WTC11 (cell line): ENCODE measurements at regions of chr9 and their contacts with region 1.

Region 1: GRCh38 chr9:70111042-70111602 is 67.5 kb downstream of the MAMDC2 start:
- DNase-seq: peak; percentile 90
- ATAC-seq: peak; percentile 65
- H3K4me3 Mint-ChIP-seq: no peak overlapping the region
- H3K27ac Mint-ChIP-seq: no peak overlapping the region
- H3K4me1 Mint-ChIP-seq: peaks cover 44% of the 10 kb centered on the region
- H3K27me3 Mint-ChIP-seq: no peaks in the 10 kb centered on the region
- CTCF ChIP-seq: peak; percentile 89

Region 2: DNA sequence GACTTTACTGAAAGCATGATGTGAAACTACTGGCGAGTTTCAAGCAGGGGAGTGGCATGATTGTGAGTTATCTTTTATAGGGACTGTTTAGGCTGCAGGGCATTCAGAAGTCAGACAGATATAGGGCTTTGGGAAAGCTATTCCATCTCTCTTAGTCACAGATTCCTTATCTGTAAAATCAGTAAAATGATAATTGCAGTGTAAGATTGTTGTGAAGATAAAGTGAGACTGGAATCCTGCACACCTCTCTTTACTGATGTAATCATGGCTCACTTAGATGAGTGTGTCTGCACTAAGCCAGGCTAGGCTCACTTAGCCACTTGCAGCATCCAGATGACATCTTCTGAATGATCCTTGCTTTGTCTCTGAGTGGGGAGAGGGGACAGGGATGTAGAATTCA is 149.3 kb before region 1 on chr9:
- CTCF ChIA-PET with region 1: interaction called, 220 read pairs
- POLR2A ChIA-PET with region 1: no interaction called
- DNase-seq: no peak
- ATAC-seq: no peak
- H3K4me3 Mint-ChIP-seq: no peak overlapping the region
- H3K27ac Mint-ChIP-seq: no peak overlapping the region
- H3K4me1 Mint-ChIP-seq: peaks cover 37% of the 10 kb centered on the region
- H3K27me3 Mint-ChIP-seq: no peaks in the 10 kb centered on the region
- CTCF ChIP-seq: no peak

Region 3: GRCh38 chr9:69981686-69982450 is 129.3 kb before region 1 on chr9:
- CTCF ChIA-PET with region 1: interaction called, 220 read pairs
- POLR2A ChIA-PET with region 1: no interaction called
- DNase-seq: no peak
- ATAC-seq: peak; percentile 39
- H3K4me3 Mint-ChIP-seq: no peak overlapping the region
- H3K27ac Mint-ChIP-seq: no peak overlapping the region
- H3K4me1 Mint-ChIP-seq: peaks cover 15% of the 10 kb centered on the region
- H3K27me3 Mint-ChIP-seq: no peaks in the 10 kb centered on the region; the same call in 1 of the 2 replicates
- CTCF ChIP-seq: no peak

Region 4: GRCh38 chr9:70034292-70034711 is 76.8 kb before region 1 on chr9:
- CTCF ChIA-PET with region 1: interaction called, 10 read pairs
- POLR2A ChIA-PET with region 1: no interaction called
- DNase-seq: no peak
- ATAC-seq: no peak
- H3K4me3 Mint-ChIP-seq: no peak overlapping the region
- H3K27ac Mint-ChIP-seq: no peak overlapping the region
- H3K4me1 Mint-ChIP-seq: 0 out of 2 replicates have a peak, but pooled peaks cover 3% of the 10 kb centered on the region
- H3K27me3 Mint-ChIP-seq: peaks cover 6% of the 10 kb centered on the region
- CTCF ChIP-seq: no peak

Region 5: DNA sequence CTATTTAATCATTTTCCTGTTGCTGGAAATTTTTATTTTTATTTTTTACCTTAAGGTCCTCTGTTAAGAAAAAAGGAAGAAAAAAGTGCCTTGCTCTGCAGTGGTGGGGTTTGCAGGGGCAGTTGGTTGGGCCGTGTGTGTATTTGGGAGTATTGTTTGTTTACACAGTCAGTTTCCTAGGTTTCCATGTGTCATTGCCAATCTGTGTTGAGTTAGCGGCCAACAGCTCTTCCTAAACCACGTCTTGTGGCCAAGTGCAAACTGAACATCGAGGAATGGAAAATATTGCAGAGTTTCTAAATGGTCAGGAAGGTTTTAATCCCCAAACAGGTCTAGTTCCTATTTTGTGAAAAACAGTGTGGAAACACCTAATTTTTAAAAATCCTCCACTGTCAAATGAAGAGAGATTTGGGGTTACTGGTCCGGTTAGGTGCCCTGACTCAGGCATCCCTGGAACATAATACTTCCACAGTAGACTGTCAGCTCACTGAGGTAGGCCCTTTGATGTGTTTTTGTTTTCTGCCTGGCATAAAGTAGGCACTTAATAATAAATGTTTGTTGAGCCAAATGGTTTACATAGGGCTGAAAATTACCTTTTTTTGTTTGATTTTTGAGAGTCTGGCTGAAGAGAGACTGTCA is 30.5 kb before region 1 on chr9:
- CTCF ChIA-PET with region 1: interaction called, 18 read pairs
- POLR2A ChIA-PET with region 1: no interaction called
- DNase-seq: no peak
- ATAC-seq: peak; percentile 47; the same call in 1 of the 2 replicates
- H3K4me3 Mint-ChIP-seq: no peak overlapping the region
- H3K27ac Mint-ChIP-seq: no peak overlapping the region; the same call in 1 of the 2 replicates
- H3K4me1 Mint-ChIP-seq: peaks cover 32% of the 10 kb centered on the region
- H3K27me3 Mint-ChIP-seq: no peaks in the 10 kb centered on the region
- CTCF ChIP-seq: no peak

Region 6: GRCh38 chr9:70100362-70100761 is 10.8 kb before region 1 on chr9:
- CTCF ChIA-PET with region 1: interaction called, 19 read pairs
- POLR2A ChIA-PET with region 1: no interaction called
- DNase-seq: no peak
- ATAC-seq: no peak
- H3K4me3 Mint-ChIP-seq: no peak overlapping the region
- H3K27ac Mint-ChIP-seq: peak overlapping the region; percentile 21; the same call in 1 of the 2 replicates
- H3K4me1 Mint-ChIP-seq: peaks cover 5% of the 10 kb centered on the region
- H3K27me3 Mint-ChIP-seq: no peaks in the 10 kb centered on the region
- CTCF ChIP-seq: no peak

Region 7: DNA sequence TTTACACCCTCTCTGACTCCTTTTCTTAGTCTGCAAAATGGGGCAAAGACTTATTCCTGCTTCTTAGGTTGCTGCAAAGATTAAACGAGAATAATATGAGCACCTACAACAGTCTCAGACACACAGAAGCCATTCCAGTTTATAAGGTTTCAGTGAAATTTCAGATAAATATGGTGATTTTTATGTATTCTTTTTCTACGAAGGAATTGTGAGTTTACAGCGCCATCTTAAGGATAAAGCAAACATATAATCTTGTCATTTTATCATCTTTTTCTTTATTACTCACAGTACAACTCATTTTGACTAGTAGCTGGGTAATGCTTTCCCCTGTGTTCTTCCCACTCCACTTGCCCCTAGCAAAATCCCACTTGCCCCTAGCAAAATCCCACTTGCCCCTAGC is 118.5 kb after region 1 on chr9:
- CTCF ChIA-PET with region 1: interaction called, 24 read pairs
- POLR2A ChIA-PET with region 1: no interaction called
- DNase-seq: no peak
- ATAC-seq: no peak
- H3K4me3 Mint-ChIP-seq: no peak overlapping the region
- H3K27ac Mint-ChIP-seq: no peak overlapping the region
- H3K4me1 Mint-ChIP-seq: peaks cover 13% of the 10 kb centered on the region; the same call in 1 of the 2 replicates
- H3K27me3 Mint-ChIP-seq: peaks cover 9% of the 10 kb centered on the region
- CTCF ChIP-seq: 0 out of 2 replicates have a peak, but pooled peaks have one; percentile 22